Activated B cell treated with CpG ODN at 0.5 μM for 24 hours (primary cell): ENCODE measurements at regions of chr6 and their contacts with region 1.

Region 1: DNA sequence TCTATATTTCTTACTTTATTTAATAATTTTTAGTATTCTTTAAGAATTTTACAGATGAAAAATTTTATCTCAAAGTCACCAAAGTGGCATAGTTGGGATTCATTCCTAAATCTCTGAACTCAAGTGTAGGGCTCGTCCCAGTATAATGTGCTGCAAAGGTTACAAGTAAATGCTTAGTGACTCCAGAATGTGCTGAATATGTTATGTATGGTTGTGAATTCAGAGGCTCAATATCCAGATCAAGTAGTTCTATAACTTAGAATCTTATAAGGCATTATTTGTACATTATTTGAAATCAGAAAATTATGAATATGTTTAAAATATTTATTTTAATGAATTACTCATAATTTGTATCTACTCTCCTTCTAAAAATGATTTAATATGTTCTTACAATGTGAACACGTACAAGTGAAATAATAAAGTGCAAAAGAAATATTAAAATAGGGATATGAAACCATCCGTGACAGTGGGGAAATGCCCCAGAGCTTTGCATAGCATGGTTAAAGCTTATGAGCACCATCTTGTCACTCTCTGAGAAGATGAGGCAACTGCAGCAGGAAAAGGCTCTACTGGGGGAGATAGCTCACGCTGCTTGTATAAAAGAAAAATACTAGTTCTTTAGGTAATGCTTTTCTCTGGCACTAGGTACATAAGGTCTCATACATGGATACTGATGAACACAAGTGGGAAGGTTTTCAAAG is 259.0 kb downstream of the FOXC1 start:
- DNase-seq: no peak
- ATAC-seq: peak; percentile 98
- H3K4me3 Mint-ChIP-seq: peak overlapping the region; percentile 65
- H3K27ac Mint-ChIP-seq: peak overlapping the region; percentile 95
- H3K4me1 Mint-ChIP-seq: peaks cover 31% of the 10 kb centered on the region
- H3K27me3 Mint-ChIP-seq: no peaks in the 10 kb centered on the region
- CTCF ChIP-seq: no peak

Region 2: DNA sequence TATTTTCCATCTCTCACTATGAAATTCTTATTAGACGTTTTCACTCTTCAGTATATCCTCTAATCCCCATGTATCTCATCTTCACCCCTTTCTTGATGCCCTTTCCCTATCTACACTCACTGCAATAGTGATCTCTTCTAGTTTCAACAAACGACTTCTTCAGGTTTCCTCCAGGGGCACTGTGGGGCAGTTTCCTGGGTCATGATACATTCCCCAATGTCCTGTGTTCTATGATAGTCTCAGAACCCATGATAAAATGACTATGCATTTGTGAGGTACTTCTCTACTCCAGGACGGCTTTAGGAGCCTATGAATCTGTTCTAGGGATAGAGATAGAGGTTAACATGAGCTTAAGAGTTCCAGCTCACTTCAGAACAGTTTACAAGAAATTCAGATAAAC is 75.7 kb before region 1 on chr6:
- CTCF ChIA-PET with region 1: no interaction called
- POLR2A ChIA-PET with region 1: interaction called, 4 read pairs
- intact Hi-C with region 1: loop called (anchors 5 kb)
- DNase-seq: no peak
- ATAC-seq: peak; percentile 60
- H3K4me3 Mint-ChIP-seq: no peak overlapping the region
- H3K27ac Mint-ChIP-seq: no peak overlapping the region
- H3K4me1 Mint-ChIP-seq: peaks cover 14% of the 10 kb centered on the region
- H3K27me3 Mint-ChIP-seq: no peaks in the 10 kb centered on the region
- CTCF ChIP-seq: no peak

Region 3: DNA sequence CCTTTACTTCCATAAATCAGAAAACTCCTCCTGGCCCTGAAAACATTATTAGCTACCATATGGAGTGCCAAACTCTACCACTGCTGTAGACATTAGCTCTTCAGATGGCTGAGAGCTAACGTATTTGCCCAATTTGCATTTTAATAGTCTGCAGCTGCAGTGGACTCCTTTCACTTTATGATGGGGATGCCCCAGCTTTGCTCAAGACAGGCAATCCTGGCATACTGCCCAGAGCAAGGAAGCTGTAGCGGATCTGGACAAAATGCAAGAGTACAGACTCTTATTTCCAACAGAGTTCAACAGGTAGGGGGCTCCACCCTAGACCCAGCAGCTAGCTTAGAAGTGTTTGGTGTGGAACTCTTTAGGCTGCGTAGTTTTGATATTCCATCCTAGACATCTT is 12.3 kb before region 1 on chr6:
- CTCF ChIA-PET with region 1: interaction called, 3 read pairs
- POLR2A ChIA-PET with region 1: interaction called, 3 read pairs
- intact Hi-C with region 1: loop called (anchors 1 kb)
- DNase-seq: peak; percentile 32
- ATAC-seq: peak; percentile 84
- H3K4me3 Mint-ChIP-seq: peak overlapping the region; percentile 30
- H3K27ac Mint-ChIP-seq: peak overlapping the region; percentile 54
- H3K4me1 Mint-ChIP-seq: peaks cover 36% of the 10 kb centered on the region
- H3K27me3 Mint-ChIP-seq: no peaks in the 10 kb centered on the region
- CTCF ChIP-seq: no peak

Region 4: GRCh38 chr6:1893470-1894130 is 24.9 kb after region 1 on chr6:
- CTCF ChIA-PET with region 1: no interaction called
- POLR2A ChIA-PET with region 1: no interaction called
- intact Hi-C with region 1: no loop called
- DNase-seq: no peak
- ATAC-seq: no peak
- H3K4me3 Mint-ChIP-seq: no peak overlapping the region
- H3K27ac Mint-ChIP-seq: no peak overlapping the region
- H3K4me1 Mint-ChIP-seq: peaks cover 7% of the 10 kb centered on the region
- H3K27me3 Mint-ChIP-seq: no peaks in the 10 kb centered on the region
- CTCF ChIP-seq: no peak